HepG2 (cell line): ENCODE measurements at regions of chr3 and their contacts with region 1.

Region 1: DNA sequence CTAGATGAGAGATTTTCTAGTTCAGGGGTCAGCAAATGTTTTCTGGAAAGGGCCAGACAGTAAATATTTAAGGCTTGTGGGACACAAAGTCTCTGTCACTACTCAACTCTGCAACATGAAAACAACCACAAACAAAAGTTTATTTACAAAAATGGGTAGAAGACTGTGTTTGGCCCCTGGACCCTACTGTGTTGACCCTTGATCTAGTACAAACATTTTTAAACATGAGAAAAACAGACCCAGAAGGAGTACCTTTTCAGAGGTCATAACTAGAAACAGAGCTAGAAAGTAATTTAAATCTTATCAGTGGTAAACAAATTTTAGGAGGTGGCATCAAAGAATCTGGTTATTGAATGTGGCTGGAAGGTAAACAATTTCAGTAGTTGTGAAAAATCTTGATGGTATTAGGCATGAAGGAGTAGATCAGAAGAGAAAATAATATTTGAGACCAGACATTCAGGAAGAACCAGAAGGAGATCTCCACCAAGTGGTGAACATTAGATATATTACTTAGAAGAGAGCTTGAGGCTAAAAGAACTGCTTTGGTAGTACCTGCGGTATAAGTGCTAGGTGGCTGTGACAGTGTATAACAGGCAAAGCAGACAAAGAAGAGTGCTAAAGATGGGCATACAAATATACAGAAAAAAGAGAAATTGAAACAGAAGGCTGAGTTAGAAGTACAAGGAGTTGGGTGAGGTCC is 101.7 kb downstream of the NR1I2 start:
- DNase-seq: no peak
- ATAC-seq: peak; percentile 77
- H3K4me3 ChIP-seq: no peak overlapping the region
- H3K27ac ChIP-seq: peak overlapping the region; percentile 3
- H3K4me1 ChIP-seq: peaks cover 15% of the 10 kb centered on the region
- H3K27me3 ChIP-seq: no peaks in the 10 kb centered on the region
- CTCF ChIP-seq: peak; percentile 41
- EP300 ChIP-seq: peak in 1 of 2 experiments; percentile 32; a peak in 1 of 4 replicates
- POLR2A ChIP-seq: no peak
- RAD21 ChIP-seq: no peak

Region 2: GRCh38 chr3:119579366-119580165 is 304.0 kb before region 1 on chr3 and contains the start of gene ADPRH:
- CTCF ChIA-PET with region 1: no interaction called
- POLR2A ChIA-PET with region 1: no interaction called
- in situ Hi-C with region 1: no loop called
- intact Hi-C with region 1: no loop called
- DNase-seq: no peak
- ATAC-seq: peak; percentile 94
- H3K4me3 ChIP-seq: peak within 1 kb of the TSS; percentile 40 to 66 (median 49)
- H3K27ac ChIP-seq: no peak within 1 kb of the TSS
- H3K4me1 ChIP-seq: no peaks in the 10 kb centered on the region
- H3K27me3 ChIP-seq: peaks cover 0 to 4% of the 10 kb centered on the region in 2 experiments; a peak in 3 of 5 replicates
- CTCF ChIP-seq: no peak
- EP300 ChIP-seq: no peak
- POLR2A ChIP-seq: no peak
- RAD21 ChIP-seq: no peak
- total RNA-seq, gene ADPRH: 0.15 TPM in 1 of 2 replicates, not detected in the other

Region 3: GRCh38 chr3:119841803-119842477 is 41.7 kb before region 1 on chr3:
- CTCF ChIA-PET with region 1: no interaction called
- POLR2A ChIA-PET with region 1: no interaction called
- in situ Hi-C with region 1: no loop called
- intact Hi-C with region 1: loop called (anchors 2 kb)
- DNase-seq: no peak
- ATAC-seq: no peak
- H3K4me3 ChIP-seq: no peak overlapping the region
- H3K27ac ChIP-seq: no peak overlapping the region
- H3K4me1 ChIP-seq: no peaks in the 10 kb centered on the region
- H3K27me3 ChIP-seq: no peaks in the 10 kb centered on the region
- CTCF ChIP-seq: no peak
- EP300 ChIP-seq: no peak
- POLR2A ChIP-seq: no peak
- RAD21 ChIP-seq: no peak